K562 (cell line): ENCODE measurements at regions of chr22 and their contacts with region 1.

Region 1: DNA sequence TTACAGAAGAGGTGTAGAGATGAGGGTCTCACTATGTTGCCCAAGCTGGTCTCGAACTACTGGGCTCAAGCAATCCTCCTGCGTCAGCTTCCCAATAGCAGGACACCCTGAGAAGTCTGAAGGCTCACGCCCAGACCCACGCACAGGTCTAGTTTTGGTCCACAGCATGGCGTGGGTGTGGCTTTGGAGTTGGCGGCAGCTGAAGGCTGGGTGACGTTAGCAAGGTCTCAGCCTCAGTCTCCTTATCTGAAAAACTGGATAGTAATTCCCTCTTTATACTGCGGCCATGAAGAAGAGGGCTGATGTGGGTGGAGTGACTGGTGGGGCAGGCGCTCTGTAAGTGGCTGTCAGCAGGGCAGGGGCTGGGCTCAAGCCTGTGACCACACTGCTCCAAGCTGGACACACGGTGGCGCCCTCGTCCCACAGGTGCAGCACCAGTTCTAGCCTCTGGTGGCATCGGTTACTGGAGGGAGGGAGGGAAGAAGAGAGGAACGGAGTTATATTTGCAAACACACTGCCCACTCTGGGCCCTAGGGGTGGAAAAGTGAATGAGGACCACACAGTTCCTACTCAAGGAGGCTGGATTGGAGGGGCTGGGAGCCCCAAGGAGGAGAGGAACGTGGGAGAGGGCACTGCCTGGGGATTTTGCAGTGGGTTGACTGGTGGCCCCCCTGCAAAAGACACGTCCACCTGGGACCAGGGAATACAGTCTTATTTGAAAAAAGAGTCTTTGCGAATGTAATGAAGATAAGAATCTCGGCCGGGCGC is 19.6 kb upstream of the CARD10 start:
- DNase-seq: peak; percentile 87 to 90 (median 88)
- ATAC-seq: peak; percentile 100
- H3K4me3 ChIP-seq: no peak overlapping the region
- H3K27ac ChIP-seq: no peak overlapping the region
- H3K4me1 ChIP-seq: peaks cover 6 to 13% of the 10 kb centered on the region in 2 experiments; a peak in 4 of 5 replicates
- H3K27me3 ChIP-seq: no peaks in the 10 kb centered on the region
- CTCF ChIP-seq: peak; percentile 95 to 98 (median 97)
- EP300 ChIP-seq: no peak
- POLR2A ChIP-seq: no peak
- RAD21 ChIP-seq: peak; percentile 92 to 95

Region 2: GRCh38 chr22:37370306-37370979 is 168.3 kb before region 1 on chr22:
- CTCF ChIA-PET with region 1: no interaction called
- POLR2A ChIA-PET with region 1: no interaction called
- in situ Hi-C with region 1: no loop called
- intact Hi-C with region 1: no loop called
- DNase-seq: no peak
- ATAC-seq: no peak
- H3K4me3 ChIP-seq: no peak overlapping the region
- H3K27ac ChIP-seq: no peak overlapping the region
- H3K4me1 ChIP-seq: peaks cover 0 to 15% of the 10 kb centered on the region in 2 experiments; a peak in 2 of 5 replicates
- H3K27me3 ChIP-seq: peaks cover 11 to 65% of the 10 kb centered on the region in 2 experiments; a peak in 4 of 5 replicates
- CTCF ChIP-seq: no peak
- EP300 ChIP-seq: no peak
- POLR2A ChIP-seq: no peak
- RAD21 ChIP-seq: no peak

Region 3: GRCh38 chr22:37525073-37525748 is 13.6 kb before region 1 on chr22:
- CTCF ChIA-PET with region 1: no interaction called
- POLR2A ChIA-PET with region 1: no interaction called
- in situ Hi-C with region 1: no loop called
- intact Hi-C with region 1: no loop called
- DNase-seq: no peak
- ATAC-seq: no peak
- H3K4me3 ChIP-seq: no peak overlapping the region
- H3K27ac ChIP-seq: no peak overlapping the region
- H3K4me1 ChIP-seq: peaks cover 4 to 10% of the 10 kb centered on the region in 2 experiments; a peak in 4 of 5 replicates
- H3K27me3 ChIP-seq: no peaks in the 10 kb centered on the region; a peak in 1 of 5 replicates
- CTCF ChIP-seq: no peak
- EP300 ChIP-seq: no peak
- POLR2A ChIP-seq: no peak
- RAD21 ChIP-seq: no peak

Region 4: DNA sequence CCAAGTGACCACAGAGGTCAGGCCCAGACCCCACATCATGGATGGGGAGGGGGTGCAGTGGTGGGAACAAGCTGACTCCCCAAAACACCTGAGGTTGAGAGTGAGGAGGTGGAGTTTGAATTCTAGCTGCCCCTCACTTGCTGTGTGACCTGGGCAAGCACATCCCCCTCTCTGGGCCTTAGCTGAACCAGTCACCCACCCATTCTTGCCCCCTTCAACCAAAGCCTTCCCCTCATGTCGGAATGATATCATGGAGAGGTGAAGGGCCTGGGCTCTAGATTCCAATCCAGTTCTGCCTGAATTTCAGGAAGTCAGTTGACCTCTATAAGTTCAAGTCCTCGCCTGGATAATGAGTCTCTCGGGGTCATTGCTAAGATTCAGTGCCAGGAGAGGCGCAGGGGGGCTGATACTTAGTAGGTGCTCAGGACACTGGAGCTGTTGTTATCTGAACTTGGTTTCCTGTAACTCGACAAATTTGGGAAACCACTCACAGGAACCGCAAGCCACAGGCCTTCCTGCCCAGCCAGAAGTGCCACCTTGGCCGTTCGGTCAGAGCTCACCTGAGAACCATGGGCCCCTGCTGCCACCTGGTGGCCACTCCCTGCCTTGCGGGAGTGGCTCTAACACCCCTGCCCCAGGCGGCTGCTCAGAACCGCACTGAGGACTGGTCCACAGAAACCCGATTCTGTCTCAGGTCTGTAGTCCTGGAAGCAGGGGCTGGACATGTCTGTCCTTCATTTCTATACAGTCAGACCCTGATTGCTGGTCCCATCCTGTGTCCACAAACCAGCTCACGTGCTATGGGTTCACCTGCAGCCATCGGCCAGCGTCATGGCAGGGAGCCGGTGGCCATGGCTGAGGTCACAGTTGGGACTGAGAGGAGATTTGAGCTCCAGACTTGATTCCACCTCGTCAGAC is 28.4 kb after region 1 on chr22:
- CTCF ChIA-PET with region 1: interaction called, 18 read pairs
- POLR2A ChIA-PET with region 1: interaction called, 7 read pairs
- in situ Hi-C with region 1: no loop called
- intact Hi-C with region 1: loop called (anchors 1 kb)
- DNase-seq: peak in 3 of 4 experiments; percentile 44 to 74 (median 66)
- ATAC-seq: peak; percentile 49
- H3K4me3 ChIP-seq: no peak overlapping the region
- H3K27ac ChIP-seq: no peak overlapping the region
- H3K4me1 ChIP-seq: peaks cover 25 to 49% of the 10 kb centered on the region in 2 experiments
- H3K27me3 ChIP-seq: no peaks in the 10 kb centered on the region
- CTCF ChIP-seq: peak; percentile 74 to 86 (median 75)
- EP300 ChIP-seq: no peak
- POLR2A ChIP-seq: 0 out of 2 replicates have a peak, but pooled peaks have one; percentile 20
- RAD21 ChIP-seq: peak; percentile 57 to 69

Region 5: GRCh38 chr22:37591823-37592404 is 53.1 kb after region 1 on chr22:
- CTCF ChIA-PET with region 1: interaction called, 22 read pairs
- POLR2A ChIA-PET with region 1: interaction called, 5 read pairs
- in situ Hi-C with region 1: no loop called
- intact Hi-C with region 1: no loop called
- DNase-seq: no peak
- ATAC-seq: no peak
- H3K4me3 ChIP-seq: no peak overlapping the region
- H3K27ac ChIP-seq: no peak overlapping the region
- H3K4me1 ChIP-seq: no peaks in the 10 kb centered on the region; a peak in 2 of 5 replicates
- H3K27me3 ChIP-seq: peaks cover 2 to 12% of the 10 kb centered on the region in 2 experiments; a peak in 3 of 5 replicates
- CTCF ChIP-seq: no peak
- EP300 ChIP-seq: no peak
- POLR2A ChIP-seq: no peak
- RAD21 ChIP-seq: no peak

Region 6: DNA sequence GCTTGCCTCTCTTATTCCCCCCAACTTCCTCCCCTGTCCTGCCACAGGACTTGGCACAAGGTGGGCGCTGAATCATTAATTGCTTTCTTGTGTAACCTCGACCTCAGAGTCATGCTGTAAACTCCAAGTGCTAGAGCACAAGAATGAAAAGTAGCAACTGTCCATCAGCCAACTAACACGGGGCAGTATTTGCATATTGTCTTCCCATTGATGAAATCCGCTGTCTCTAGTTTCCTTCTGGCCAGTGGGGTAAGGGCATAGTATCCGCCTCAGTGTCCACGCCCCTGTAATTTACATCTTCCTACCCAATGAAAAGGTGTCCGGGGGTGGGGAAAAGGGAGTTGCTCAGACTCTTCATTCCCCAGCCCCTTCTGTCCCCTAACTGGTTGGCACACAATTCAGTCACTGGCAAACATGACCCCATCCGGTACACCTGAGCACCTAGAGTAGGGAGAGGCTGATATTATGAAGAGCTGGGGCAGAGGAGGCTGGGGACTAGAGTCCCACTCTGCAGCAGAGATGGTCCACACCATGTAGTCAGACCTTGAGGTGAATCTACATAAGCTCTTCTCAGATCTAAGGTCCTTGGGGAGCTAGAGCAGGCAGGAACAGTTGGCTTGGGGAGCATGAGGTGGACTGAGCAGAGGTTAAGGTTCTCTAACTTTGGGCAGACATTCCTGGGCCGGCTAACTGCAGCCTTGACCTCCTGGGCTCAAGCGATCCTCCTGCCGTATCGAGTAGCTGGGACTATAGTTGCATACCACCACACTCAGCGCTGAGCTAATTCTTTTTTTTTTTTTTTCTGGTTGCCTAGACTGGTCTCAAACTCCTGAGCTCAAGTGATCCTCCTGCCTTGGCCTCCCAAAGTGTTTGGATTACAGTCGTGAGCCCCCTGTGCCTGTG is 63.0 kb after region 1 on chr22:
- CTCF ChIA-PET with region 1: interaction called, 3 read pairs
- POLR2A ChIA-PET with region 1: no interaction called
- in situ Hi-C with region 1: loop called (anchors 5 kb)
- intact Hi-C with region 1: no loop called
- DNase-seq: peak in 2 of 4 experiments; percentile 81 to 82
- ATAC-seq: peak; percentile 100
- H3K4me3 ChIP-seq: no peak overlapping the region
- H3K27ac ChIP-seq: peak overlapping the region; percentile 50; the same call in 2 of the 3 replicates
- H3K4me1 ChIP-seq: peaks cover 10 to 20% of the 10 kb centered on the region in 2 experiments; a peak in 4 of 5 replicates
- H3K27me3 ChIP-seq: no peaks in the 10 kb centered on the region
- CTCF ChIP-seq: no peak
- EP300 ChIP-seq: no peak
- POLR2A ChIP-seq: peak; percentile 36; the same call in 1 of the 2 replicates
- RAD21 ChIP-seq: no peak

Region 7: DNA sequence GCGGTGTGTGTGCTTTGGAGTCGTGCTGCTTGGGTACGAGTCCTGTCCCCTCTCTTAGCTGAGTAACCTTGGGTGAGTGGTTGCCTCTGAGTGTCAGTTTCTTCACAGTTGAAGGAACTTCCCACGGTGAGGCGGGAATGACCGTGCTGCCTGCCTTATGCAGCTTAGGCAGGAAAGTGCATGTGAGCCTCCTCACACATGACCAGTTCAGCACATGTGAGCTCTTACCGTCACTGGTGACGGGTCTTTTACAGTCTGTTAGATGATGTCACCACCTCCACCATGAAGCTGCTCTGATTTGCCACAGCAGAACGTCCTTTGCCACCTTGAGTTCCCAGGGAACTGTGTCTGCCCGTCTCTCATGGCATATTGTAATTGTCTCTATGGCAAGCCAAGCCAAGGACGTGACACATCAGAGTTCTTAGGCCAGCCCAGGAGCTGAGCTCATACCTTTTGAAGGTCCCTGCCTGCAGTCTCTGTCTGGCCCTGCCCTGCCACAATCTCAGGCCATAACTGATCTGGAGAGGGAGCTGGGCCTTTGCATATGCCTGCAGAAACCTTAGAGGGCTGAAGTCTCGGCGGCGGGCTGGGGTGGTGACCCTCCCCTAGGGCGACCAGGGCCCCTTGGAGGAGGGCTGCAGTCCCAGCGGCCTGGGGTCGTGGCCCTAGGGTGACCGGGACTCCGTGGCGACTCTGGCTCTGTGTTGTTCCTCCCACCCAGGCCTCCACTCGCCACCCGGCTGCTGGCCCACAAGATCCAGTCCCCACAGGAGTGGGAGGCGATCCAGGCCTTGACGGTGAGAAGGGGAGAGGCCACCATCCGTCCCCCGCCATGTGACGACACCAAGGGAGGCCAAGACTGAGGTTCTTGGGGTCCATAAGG is 77.7 kb after region 1 on chr22:
- CTCF ChIA-PET with region 1: no interaction called
- POLR2A ChIA-PET with region 1: no interaction called
- in situ Hi-C with region 1: no loop called
- intact Hi-C with region 1: no loop called
- DNase-seq: no peak
- ATAC-seq: no peak
- H3K4me3 ChIP-seq: no peak overlapping the region
- H3K27ac ChIP-seq: no peak overlapping the region
- H3K4me1 ChIP-seq: peaks cover 0 to 5% of the 10 kb centered on the region in 2 experiments; a peak in 2 of 5 replicates
- H3K27me3 ChIP-seq: no peaks in the 10 kb centered on the region
- CTCF ChIP-seq: no peak
- EP300 ChIP-seq: no peak
- POLR2A ChIP-seq: no peak
- RAD21 ChIP-seq: no peak

Region 8: GRCh38 chr22:37647928-37648327 is 109.2 kb after region 1 on chr22:
- CTCF ChIA-PET with region 1: no interaction called
- POLR2A ChIA-PET with region 1: no interaction called
- in situ Hi-C with region 1: no loop called
- intact Hi-C with region 1: no loop called
- DNase-seq: no peak
- ATAC-seq: no peak
- H3K4me3 ChIP-seq: no peak overlapping the region
- H3K27ac ChIP-seq: no peak overlapping the region
- H3K4me1 ChIP-seq: peaks cover 0 to 11% of the 10 kb centered on the region in 2 experiments; a peak in 2 of 5 replicates
- H3K27me3 ChIP-seq: no peaks in the 10 kb centered on the region
- CTCF ChIP-seq: no peak
- EP300 ChIP-seq: no peak
- POLR2A ChIP-seq: no peak
- RAD21 ChIP-seq: no peak